BJ (cell line): ENCODE measurements at regions of chr6 and their contacts with region 1.

Region 1: DNA sequence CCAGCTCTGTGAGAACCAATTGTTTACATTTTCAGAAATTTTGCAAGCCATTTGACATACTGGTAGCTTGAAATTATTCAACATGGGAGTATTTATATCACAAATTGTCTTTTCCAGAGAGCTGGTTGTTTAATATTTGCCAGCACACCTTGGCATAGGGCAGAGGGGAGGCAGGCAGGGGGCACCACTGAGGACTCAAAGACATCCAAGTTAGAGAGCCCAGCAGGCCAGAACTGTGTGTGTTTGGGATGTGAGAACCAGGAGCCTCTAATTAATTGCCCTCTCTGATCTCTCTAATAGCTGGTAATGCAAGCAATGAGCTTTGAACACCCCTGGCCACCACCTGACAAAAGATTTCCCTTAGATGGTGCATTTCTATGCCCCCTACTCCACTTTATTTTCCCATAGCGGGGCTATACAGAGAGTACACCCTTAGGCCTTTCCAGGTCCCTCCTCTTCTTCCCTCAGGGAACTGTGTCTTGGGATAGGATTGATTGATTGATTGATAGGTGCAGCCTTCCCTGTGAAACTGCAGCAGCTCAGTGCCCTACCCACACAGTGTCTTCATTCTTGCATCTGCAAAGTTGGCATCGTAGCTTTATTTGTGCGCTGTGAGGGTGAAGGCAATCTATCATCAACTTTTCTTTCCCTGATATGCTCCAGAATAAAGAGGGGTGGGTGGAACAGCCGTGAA is 29.2 kb downstream of the MOCS1 start:
- DNase-seq: no peak
- H3K4me3 ChIP-seq: no peak overlapping the region
- H3K27me3 ChIP-seq: no peaks in the 10 kb centered on the region
- CTCF ChIP-seq: 0 out of 2 replicates have a peak, but pooled peaks have one; percentile 6

Region 2: GRCh38 chr6:39915866-39916265 is 10.8 kb after region 1 on chr6:
- CTCF ChIA-PET with region 1: interaction called, 11 read pairs
- POLR2A ChIA-PET with region 1: no interaction called
- DNase-seq: no peak
- H3K4me3 ChIP-seq: no peak overlapping the region
- H3K27me3 ChIP-seq: no peaks in the 10 kb centered on the region
- CTCF ChIP-seq: no peak

Region 3: DNA sequence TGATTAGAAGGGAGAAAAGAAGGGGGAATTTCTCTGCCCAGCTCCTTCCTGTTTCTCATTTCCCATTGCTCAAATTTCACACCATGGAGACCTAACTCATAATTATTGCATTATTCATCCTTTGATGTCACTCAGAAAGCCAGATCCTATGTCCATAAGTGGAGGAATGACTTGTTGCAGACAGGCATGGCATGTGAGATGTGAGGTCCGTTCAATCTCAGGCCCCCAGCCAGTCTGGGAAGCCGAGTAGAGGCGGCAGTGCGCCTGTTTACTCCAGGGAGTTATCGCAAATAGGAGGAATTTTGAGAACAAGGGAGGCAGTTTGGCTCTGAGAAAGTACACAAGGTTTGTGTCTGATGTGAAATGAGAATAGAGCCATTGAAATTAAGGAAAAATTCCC is 56.1 kb after region 1 on chr6:
- CTCF ChIA-PET with region 1: no interaction called
- POLR2A ChIA-PET with region 1: no interaction called
- DNase-seq: no peak
- H3K4me3 ChIP-seq: no peak overlapping the region
- H3K27me3 ChIP-seq: no peaks in the 10 kb centered on the region
- CTCF ChIP-seq: no peak